Aorta (tissue), 5 donors: ENCODE measurements at regions of chr3 and their contacts with region 1.

Region 1: DNA sequence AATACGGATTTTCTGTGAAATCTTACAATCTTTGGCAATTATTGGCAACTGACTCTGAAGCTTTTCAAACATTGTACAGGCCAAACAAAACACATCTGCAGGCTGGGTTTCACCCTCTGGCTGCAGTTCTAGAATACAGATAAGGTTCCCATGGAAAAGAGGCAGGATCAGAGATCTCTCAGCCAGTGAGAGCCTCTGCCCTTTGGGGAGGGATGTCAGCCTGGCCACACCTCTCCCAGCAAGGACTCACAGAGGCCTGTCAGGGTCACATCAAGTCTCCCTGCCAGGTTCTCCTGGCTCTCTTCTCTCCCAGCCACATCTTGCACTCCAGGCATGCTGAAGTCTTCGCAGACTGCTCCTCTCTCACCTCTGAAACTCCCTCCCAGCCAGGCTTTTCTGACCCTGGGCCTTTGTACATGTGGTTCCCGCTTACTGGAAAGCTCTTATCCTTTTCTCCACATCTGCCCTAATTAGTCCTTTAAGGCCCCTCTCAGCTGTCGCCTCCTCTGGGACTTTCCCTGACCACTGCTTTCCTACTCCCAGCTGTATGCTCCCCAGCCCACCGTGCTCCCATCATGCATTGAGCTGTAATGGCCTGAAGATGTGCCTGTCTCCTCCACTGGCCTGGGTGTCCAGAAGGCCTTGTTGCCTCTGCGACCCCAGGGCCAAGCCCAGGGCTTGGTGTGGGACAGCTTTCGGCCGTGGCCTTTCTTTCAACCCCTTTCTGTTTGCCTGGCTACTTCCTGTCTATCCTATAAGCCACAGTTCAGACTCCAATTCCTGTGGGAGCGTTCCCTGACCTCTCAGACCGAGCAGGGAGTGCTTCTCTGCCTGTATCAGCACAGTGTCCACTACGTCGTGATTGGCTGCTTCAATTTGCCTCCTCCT is 4.3 kb downstream of the RBP1 start:
- DNase-seq: peak; percentile 81 to 89
- ATAC-seq: peak; percentile 84
- H3K4me3 ChIP-seq: no peak overlapping the region
- H3K27ac ChIP-seq: peak overlapping the region; percentile 58 to 65
- H3K4me1 ChIP-seq: peaks cover 0 to 4% of the 10 kb centered on the region in 2 donors
- H3K27me3 ChIP-seq: no peaks in the 10 kb centered on the region

Region 2: GRCh38 chr3:139677388-139678155 is 142.3 kb after region 1 on chr3 and contains the start of gene NMNAT3:
- intact Hi-C with region 1: loop called in 1 of 2 experiments (anchors 5 kb)
- DNase-seq: peak; percentile 89 to 94
- ATAC-seq: peak; percentile 97
- H3K4me3 ChIP-seq: peak within 1 kb of the TSS; percentile 22 to 68
- H3K27ac ChIP-seq: no peak within 1 kb of the TSS
- H3K4me1 ChIP-seq: no peaks in the 10 kb centered on the region
- H3K27me3 ChIP-seq: no peaks in the 10 kb centered on the region
- total RNA-seq, gene NMNAT3: 5.2 to 12.7 TPM

Region 3: GRCh38 chr3:140186421-140186920 is 651.2 kb after region 1 on chr3:
- intact Hi-C with region 1: no loop called
- DNase-seq: no peak
- ATAC-seq: peak; percentile 78
- H3K4me3 ChIP-seq: no peak overlapping the region
- H3K27ac ChIP-seq: peak overlapping the region in 1 of 2 donors; percentile 80
- H3K4me1 ChIP-seq: peaks cover 2 to 25% of the 10 kb centered on the region in 2 donors
- H3K27me3 ChIP-seq: no peaks in the 10 kb centered on the region